Activated CD4-positive, alpha-beta memory T cell treated with anti-CD3 and anti-CD28 coated beads for 36 hours (primary cell): ENCODE measurements at regions of chr21 and their contacts with region 1.

Region 1: GRCh38 chr21:42381334-42381984 is 14.4 kb downstream of the TMPRSS3 start:
- DNase-seq: peak; percentile 76
- H3K4me3 Mint-ChIP-seq: no peak overlapping the region
- H3K27ac Mint-ChIP-seq: peak overlapping the region; percentile 2
- H3K4me1 Mint-ChIP-seq: peaks cover 13% of the 10 kb centered on the region
- H3K27me3 Mint-ChIP-seq: no peaks in the 10 kb centered on the region

Region 2: DNA sequence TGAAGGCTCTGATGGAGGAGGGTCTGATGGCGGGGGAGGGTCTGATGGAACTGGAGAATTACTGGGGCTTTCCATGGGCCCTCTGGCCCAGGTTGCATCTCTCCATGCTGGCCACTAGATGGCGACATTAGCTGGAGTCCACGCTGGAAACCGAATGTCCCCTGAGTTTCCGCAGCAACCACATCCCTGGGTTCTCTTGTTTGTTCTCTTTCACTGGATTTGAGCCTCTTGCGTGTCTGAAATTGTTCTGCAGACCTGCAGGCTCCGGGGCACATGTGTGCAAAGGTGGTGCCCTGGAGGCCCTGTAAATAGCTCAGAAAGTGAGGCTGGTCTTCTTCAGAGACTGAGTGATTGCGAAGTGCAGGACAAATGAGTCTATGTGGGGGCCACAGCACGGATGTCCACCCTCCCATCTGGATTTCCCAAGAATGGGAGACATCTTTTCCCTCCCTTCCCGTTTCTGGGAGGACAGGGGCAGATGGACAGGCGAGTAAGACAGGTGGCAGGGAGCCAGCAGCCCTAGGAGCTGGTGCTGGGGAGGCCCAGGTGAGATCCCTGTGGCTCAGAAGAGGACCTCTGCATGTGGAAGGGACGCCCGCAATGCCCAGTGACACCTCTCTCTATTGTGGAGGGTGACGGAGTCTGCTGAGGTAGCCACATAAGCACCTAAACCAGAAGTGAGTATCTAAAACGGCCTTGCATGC is 235.7 kb before region 1 on chr21:
- CTCF ChIA-PET with region 1: interaction called, 8 read pairs
- POLR2A ChIA-PET with region 1: no interaction called
- intact Hi-C with region 1: loop called (anchors 5 kb)
- DNase-seq: peak; percentile 75
- H3K4me3 Mint-ChIP-seq: no peak overlapping the region
- H3K27ac Mint-ChIP-seq: no peak overlapping the region
- H3K4me1 Mint-ChIP-seq: peaks cover 3% of the 10 kb centered on the region
- H3K27me3 Mint-ChIP-seq: no peaks in the 10 kb centered on the region

Region 3: DNA sequence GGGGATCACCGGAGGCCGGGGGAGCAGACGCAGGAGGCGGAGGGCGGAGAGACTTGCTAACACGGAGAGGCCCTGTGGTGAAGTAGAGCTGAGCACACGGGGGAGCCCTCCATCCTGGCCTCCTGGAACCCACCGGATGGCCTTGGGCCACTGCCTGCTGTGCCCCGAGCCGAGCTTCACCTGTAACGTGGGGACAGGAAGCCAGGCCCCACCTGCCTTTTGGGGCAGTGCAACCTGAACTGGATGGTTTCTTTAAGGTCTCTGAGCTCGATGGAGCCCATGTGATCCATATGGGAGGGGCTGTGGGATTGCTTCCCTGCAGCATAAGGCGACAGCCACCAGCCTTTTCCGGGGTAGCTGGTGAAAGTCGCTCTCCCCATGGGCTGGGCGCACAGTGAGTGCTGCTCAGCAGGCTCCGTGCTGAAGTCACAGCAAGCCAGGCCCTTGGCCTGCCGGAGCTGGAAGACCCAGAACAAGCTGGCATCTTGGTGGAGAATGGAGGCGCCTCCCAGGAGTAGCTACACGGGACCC is 102.1 kb before region 1 on chr21:
- CTCF ChIA-PET with region 1: no interaction called
- POLR2A ChIA-PET with region 1: no interaction called
- intact Hi-C with region 1: no loop called
- DNase-seq: no peak
- H3K4me3 Mint-ChIP-seq: no peak overlapping the region
- H3K27ac Mint-ChIP-seq: no peak overlapping the region
- H3K4me1 Mint-ChIP-seq: no peaks in the 10 kb centered on the region
- H3K27me3 Mint-ChIP-seq: no peaks in the 10 kb centered on the region

Region 4: DNA sequence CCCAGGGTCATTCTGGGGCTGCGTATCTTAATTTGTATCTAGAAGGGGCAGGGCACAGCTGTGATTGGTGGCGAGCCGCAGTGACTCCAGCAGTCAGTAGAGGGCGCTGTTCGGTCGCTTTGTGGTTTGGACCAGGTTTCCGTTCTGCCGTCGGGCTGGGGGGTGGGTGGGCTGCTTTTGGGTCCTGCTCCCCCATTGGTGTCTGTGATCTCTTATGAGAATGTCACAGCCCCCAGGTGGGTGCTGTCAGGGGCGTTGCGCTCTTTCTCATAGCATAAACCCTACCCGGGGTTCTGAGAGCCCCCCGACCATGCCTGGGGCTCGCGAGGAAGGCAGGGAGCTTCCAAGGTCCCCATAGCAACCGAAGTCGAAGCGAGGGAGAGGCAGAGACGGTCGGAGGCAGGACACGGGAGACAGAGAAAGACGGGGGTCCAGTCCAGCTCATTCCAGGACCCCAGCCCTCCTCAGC is 71.7 kb before region 1 on chr21:
- CTCF ChIA-PET with region 1: interaction called, 24 read pairs
- POLR2A ChIA-PET with region 1: no interaction called
- intact Hi-C with region 1: loop called (anchors 10 kb)
- DNase-seq: peak; percentile 83
- H3K4me3 Mint-ChIP-seq: no peak overlapping the region
- H3K27ac Mint-ChIP-seq: no peak overlapping the region
- H3K4me1 Mint-ChIP-seq: peaks cover 3% of the 10 kb centered on the region
- H3K27me3 Mint-ChIP-seq: peaks cover 5% of the 10 kb centered on the region

Region 5: DNA sequence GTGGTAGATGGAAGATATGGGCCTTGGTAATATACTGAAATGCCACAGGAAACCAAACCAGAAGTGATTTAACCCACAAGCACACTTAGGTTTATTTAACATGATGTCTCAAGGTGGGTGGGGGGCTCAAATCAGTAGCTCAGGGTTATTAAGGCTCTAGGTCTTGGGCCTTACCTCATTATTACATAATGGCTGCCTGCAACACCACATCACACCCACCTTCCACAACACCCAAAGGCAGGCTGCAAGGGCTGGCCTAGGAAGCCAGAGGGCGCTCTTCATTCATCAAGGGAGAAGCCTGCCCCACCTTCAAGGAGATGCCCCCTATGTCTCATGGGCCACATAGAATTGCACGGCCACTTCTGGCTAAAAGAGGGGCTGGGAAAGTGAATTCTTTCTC is 21.1 kb before region 1 on chr21:
- CTCF ChIA-PET with region 1: interaction called, 29 read pairs
- POLR2A ChIA-PET with region 1: interaction called, 6 read pairs
- intact Hi-C with region 1: no loop called
- DNase-seq: peak; percentile 41
- H3K4me3 Mint-ChIP-seq: no peak overlapping the region
- H3K27ac Mint-ChIP-seq: no peak overlapping the region
- H3K4me1 Mint-ChIP-seq: no peaks in the 10 kb centered on the region
- H3K27me3 Mint-ChIP-seq: peaks cover 8% of the 10 kb centered on the region

Region 6: GRCh38 chr21:42400525-42400924 is 19.1 kb after region 1 on chr21:
- CTCF ChIA-PET with region 1: interaction called, 28 read pairs
- POLR2A ChIA-PET with region 1: interaction called, 3 read pairs
- intact Hi-C with region 1: no loop called
- DNase-seq: peak; percentile 55
- H3K4me3 Mint-ChIP-seq: peak overlapping the region; percentile 49
- H3K27ac Mint-ChIP-seq: peak overlapping the region; percentile 77
- H3K4me1 Mint-ChIP-seq: peaks cover 50% of the 10 kb centered on the region
- H3K27me3 Mint-ChIP-seq: no peaks in the 10 kb centered on the region

Region 7: GRCh38 chr21:42424914-42425541 is 43.6 kb after region 1 on chr21:
- CTCF ChIA-PET with region 1: interaction called, 18 read pairs
- POLR2A ChIA-PET with region 1: no interaction called
- intact Hi-C with region 1: no loop called
- DNase-seq: peak; percentile 84
- H3K4me3 Mint-ChIP-seq: peak overlapping the region; percentile 48
- H3K27ac Mint-ChIP-seq: peak overlapping the region; percentile 86
- H3K4me1 Mint-ChIP-seq: peaks cover 72% of the 10 kb centered on the region
- H3K27me3 Mint-ChIP-seq: no peaks in the 10 kb centered on the region

Region 8: GRCh38 chr21:42449296-42449927 is 68.0 kb after region 1 on chr21:
- CTCF ChIA-PET with region 1: interaction called, 36 read pairs
- POLR2A ChIA-PET with region 1: no interaction called
- intact Hi-C with region 1: loop called (anchors 1 kb)
- DNase-seq: no peak
- H3K4me3 Mint-ChIP-seq: no peak overlapping the region
- H3K27ac Mint-ChIP-seq: no peak overlapping the region
- H3K4me1 Mint-ChIP-seq: peaks cover 27% of the 10 kb centered on the region
- H3K27me3 Mint-ChIP-seq: no peaks in the 10 kb centered on the region

Region 9: DNA sequence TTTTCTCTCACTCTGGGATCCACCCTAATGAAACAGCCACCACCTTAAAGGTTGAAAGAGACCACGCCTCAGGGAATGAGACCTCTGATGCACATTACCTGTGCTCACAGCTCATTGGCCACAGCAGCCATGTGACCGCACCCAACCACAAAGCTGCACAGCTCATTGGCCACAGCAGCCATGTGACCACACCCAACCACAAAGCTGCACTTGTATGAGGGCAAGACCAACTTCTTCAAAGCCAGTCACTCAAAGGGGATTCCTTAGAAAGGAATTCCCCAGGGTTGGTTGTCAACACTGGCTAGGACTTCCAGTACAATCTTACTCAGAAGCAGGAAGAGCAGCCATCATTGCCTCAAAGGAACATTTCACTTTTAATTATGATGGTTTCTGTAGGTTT is 228.4 kb after region 1 on chr21:
- CTCF ChIA-PET with region 1: no interaction called
- POLR2A ChIA-PET with region 1: no interaction called
- intact Hi-C with region 1: no loop called
- DNase-seq: peak; percentile 69
- H3K4me3 Mint-ChIP-seq: no peak overlapping the region
- H3K27ac Mint-ChIP-seq: no peak overlapping the region
- H3K4me1 Mint-ChIP-seq: peaks cover 17% of the 10 kb centered on the region
- H3K27me3 Mint-ChIP-seq: peaks cover 1% of the 10 kb centered on the region